Posterior cingulate gyrus (tissue), 11 donors: ENCODE measurements at regions of chr10 and their contacts with region 1.

Region 1: DNA sequence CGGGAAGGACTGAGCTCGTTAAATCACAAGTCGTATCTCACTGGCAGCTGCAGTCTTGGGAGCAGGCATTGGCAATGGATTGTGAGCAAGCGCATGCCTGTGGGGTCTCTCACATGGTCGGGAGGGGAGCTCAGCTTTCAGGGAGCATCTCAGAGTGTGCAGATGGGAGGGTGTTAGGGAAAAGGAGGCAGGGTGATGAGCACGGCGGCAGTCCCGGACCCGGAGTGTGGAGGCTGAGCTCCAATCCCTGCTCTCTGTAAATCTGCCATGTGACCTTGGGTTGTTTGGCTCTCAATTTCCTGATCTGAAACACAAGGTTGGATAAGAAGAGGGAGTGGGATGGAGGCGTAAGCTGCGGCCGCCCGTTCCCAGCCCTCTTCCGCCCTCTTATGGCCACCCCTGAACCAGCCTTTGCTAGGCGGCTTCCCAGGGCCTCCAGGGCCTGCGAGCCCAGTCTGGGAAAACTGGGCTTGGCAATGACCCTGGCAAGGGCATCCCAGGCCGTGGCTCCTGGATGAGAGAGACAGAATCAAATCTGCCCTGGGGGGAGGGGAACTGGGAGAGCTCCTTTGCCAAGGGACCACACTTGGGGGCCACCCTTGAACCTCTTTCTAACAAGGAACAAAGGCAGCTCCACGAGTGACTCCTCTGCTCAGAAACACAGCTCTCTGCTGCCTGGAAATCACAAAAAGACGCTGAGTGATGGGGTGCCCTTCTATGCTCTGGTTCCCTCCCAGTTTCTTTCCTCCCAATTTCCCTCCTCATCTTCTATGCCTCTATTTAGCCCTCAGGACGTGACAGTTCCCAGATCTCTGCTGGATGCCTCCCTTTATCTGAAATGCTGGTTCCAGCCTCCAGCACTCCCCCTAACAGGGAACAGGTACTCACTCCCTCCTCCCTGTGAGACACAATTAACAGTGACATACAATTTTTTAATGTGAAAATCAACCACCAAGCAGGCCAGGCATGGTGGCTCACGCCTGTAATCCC is 41.7 kb upstream of the LOXL4 start:
- DNase-seq: peak; percentile 44 to 96 (median 74)

Region 2: DNA sequence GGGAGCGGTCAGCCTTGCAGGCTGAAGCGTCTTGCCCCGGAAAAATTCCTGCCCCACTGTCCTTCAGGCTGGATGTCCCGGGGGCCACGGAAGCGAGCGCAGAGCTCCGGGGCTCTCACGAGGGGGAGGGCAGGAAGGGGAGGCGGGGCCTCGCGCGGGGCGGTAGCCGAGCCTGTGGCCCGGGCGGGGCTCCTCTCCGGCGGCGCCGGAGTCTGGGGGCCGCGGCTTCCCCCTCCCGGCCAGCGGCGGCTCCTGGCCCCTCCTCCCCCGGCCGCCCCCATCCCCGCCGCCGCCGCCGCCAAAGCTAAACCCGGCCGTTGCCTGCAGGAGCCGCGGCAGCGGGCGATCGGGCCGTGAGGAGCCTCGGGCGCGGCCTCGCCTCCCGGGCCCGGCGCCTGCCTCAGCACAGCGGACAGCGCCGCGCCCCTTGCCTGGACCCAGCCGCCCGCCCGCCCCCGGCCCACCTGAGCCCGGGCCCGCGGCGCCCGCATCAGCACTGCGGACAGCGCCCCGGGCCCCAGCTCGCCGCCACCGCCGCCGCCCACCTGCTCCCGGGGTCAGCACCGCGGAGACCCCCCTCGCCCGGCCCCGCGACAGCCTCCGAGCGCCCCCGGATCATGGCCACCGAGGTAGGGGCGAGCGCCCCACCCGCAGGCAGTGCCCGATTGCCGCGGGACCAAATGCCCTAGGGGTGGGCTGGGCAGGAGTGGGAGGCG is 459.8 kb before region 1 on chr10 and contains the start of gene GOLGA7B:
- intact Hi-C with region 1: no loop called
- DNase-seq: peak in 7 of 10 donors; percentile 36 to 94 (median 62)

Region 3: DNA sequence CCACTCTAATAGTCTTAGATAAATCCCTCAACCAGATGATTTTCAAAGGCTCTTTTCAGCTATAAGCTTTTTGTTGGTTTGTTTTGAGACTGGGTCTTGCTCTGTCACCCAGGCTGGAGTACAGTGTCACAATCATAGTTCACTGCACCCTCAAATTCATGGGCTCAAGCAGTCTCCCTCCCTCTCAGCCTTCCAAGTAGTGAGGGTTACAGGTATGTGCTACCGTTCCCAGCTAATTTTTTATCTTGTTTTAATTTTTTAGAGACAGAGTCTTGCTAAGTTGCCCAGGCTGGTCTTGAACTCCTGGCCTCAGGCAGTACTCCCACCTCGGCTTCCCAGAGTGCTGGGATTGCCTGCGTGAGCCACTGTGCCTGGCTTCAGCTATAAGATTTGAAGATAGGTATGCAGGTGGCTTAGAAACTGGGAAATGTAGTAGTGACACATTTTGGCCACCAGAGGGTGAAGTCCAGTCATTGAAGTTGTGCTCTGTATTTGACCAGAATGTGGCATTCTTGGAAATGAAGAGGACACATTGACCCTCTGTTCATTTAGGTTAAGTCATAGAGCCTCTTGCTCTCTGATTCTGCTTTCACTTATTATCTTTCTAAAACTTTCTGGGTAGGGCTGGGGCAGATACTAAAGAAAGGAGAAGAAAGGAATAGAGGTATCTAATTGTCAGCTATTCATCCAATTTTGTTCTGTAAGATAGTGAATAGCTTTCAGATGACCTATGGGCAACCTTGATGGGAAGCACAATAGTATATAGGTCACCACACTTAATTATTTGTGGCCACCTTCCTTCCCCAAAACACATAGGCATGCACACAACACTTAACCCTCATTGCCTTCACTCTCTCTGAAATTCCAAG is 139.2 kb before region 1 on chr10:
- intact Hi-C with region 1: loop called (anchors 1 kb)
- DNase-seq: peak in 4 of 10 donors; percentile 9 to 49 (median 34)

Region 4: DNA sequence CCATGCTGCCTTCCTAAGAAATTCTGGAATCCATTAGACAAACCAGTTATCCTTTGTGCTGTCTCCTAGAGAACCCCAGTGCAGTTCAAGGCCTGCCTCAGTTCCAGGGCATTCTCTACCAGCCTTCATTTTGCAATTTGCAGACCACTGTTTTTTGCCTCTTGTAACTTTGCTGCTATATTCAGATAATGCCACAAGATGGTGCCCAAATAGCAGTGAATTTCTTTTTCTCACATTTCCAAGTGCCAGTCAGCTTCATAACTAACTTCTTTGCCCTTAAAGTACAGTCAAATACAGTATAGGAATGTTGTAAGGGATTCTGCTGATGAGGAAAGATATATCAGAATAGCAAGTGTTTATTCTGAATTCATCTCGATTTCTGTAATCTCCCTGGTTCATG is 66.8 kb before region 1 on chr10:
- intact Hi-C with region 1: loop called (anchors 1 kb)
- DNase-seq: no peak